Motor neuron (in vitro differentiated cells): ENCODE measurements at regions of chr6 and their contacts with region 1.

Region 1: GRCh38 chr6:71190809-71191208 is 97.8 kb upstream of the OGFRL1 start:
- ATAC-seq: no peak
- H3K4me3 ChIP-seq: no peak overlapping the region
- H3K27ac ChIP-seq: no peak overlapping the region
- H3K4me1 ChIP-seq: peaks cover 2 to 8% of the 10 kb centered on the region in 2 donors

Region 2: GRCh38 chr6:71510057-71510713 is 319.4 kb after region 1 on chr6:
- in situ Hi-C with region 1: loop called in 1 of 9 experiments (anchors 25 kb)
- ATAC-seq: peak in 5 of 8 experiments; percentile 18 to 96 (median 82)
- H3K4me3 ChIP-seq: no peak overlapping the region
- H3K27ac ChIP-seq: no peak overlapping the region
- H3K4me1 ChIP-seq: no peaks in the 10 kb centered on the region